Panc1 (cell line): ENCODE measurements at regions of chr14 and their contacts with region 1.

Region 1: DNA sequence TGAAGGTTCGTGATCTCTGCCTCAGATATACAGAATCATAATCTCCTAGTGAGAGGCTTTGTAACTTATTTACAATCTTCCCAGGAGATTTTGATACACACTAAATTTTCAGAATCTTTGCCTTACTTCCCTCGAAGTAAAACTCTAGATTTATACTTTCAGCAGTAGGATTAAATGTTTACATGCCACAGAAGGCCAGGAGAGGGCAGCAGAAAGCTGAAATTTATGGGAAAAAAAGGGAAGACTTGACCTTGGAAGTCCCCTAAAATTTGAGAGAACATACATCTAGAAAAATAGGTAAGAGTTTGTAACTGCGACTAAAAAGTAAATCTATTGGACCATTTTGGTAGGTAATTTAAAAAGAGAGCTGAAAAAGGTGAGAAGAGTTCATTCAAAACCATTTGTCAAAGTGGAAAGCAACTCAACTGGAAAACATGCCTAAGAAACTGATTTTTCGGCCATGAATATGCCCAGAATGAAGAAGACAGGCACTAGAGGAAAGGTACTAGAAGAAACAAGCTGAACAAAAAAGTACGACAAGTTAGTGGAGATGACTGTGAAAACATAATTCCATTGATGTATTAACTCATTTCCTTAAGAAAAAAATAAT is 242.0 kb upstream of the MDGA2 start:
- DNase-seq: no peak
- ATAC-seq: no peak
- H3K4me3 ChIP-seq: no peak overlapping the region
- H3K27ac ChIP-seq: no peak overlapping the region
- H3K4me1 ChIP-seq: no peaks in the 10 kb centered on the region
- H3K27me3 ChIP-seq: no peaks in the 10 kb centered on the region
- CTCF ChIP-seq: peak; percentile 34; the same call in 1 of the 2 replicates

Region 2: GRCh38 chr14:47846008-47846407 is 71.4 kb before region 1 on chr14:
- CTCF ChIA-PET with region 1: no interaction called
- POLR2A ChIA-PET with region 1: no interaction called
- in situ Hi-C with region 1: no loop called
- intact Hi-C with region 1: no loop called
- DNase-seq: no peak
- ATAC-seq: no peak
- H3K4me3 ChIP-seq: no peak overlapping the region
- H3K27ac ChIP-seq: no peak overlapping the region
- H3K4me1 ChIP-seq: no peaks in the 10 kb centered on the region
- H3K27me3 ChIP-seq: no peaks in the 10 kb centered on the region
- CTCF ChIP-seq: no peak

Region 3: DNA sequence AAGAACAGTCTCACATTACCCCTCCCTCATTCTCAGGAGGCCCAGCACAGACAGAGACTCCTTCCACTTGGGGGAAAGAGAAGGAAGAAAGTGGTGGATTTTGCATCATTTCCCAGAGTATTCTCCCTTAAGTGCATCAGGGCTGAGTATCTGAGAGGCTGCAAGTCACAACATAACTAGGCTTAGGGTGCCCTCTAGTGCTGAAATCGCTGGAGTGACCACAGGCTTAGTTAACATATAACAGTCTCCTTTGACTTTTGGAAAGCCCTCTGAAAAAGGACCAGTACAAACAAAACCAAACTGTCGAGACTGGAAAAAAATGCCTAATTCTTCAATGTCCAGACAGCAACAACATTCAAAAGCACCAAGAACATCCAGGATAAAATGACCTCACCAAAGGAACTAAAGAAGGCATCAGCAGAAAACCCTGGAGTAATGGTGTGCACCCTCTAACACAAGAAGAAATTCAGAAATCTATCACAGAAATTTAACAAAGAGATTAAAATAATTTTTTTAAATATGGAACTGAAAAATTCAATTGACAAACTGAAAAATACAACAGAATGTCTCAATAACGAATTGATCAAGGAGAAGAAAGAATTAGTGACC is 1256.4 kb after region 1 on chr14:
- CTCF ChIA-PET with region 1: no interaction called
- POLR2A ChIA-PET with region 1: no interaction called
- in situ Hi-C with region 1: no loop called
- intact Hi-C with region 1: loop called (anchors 5 kb)
- DNase-seq: peak; percentile 50
- ATAC-seq: peak; percentile 80; the same call in 1 of the 2 replicates
- H3K4me3 ChIP-seq: no peak overlapping the region
- H3K27ac ChIP-seq: no peak overlapping the region
- H3K4me1 ChIP-seq: no peaks in the 10 kb centered on the region
- H3K27me3 ChIP-seq: no peaks in the 10 kb centered on the region
- CTCF ChIP-seq: peak; percentile 67